ENCODE measurements at regions of chr2 and their contacts with region 1.

Region 1: GRCh38 chr2:200713003-200713703 is 98.6 kb upstream of the BZW1 start:
- DNase-seq: peak; percentile 81 to 90
- ATAC-seq: peak; percentile 99
- H3K4me3 ChIP-seq: peak overlapping the region; percentile 62
- H3K27ac ChIP-seq: peak overlapping the region; percentile 76
- H3K4me1 ChIP-seq: peaks cover 3% of the 10 kb centered on the region
- H3K27me3 ChIP-seq: no peaks in the 10 kb centered on the region
- CTCF ChIP-seq: peak; percentile 79

Region 2: GRCh38 chr2:200765139-200765951 is 52.2 kb after region 1 on chr2:
- intact Hi-C with region 1: loop called in 1 of 2 experiments (anchors 5 kb)
- DNase-seq: peak in 1 of 2 donors; percentile 34
- ATAC-seq: peak; percentile 41 to 70 (median 58)
- H3K4me3 ChIP-seq: no peak overlapping the region
- H3K27ac ChIP-seq: peak overlapping the region; percentile 77
- H3K4me1 ChIP-seq: peaks cover 18% of the 10 kb centered on the region
- H3K27me3 ChIP-seq: no peaks in the 10 kb centered on the region
- CTCF ChIP-seq: no peak

Region 3: DNA sequence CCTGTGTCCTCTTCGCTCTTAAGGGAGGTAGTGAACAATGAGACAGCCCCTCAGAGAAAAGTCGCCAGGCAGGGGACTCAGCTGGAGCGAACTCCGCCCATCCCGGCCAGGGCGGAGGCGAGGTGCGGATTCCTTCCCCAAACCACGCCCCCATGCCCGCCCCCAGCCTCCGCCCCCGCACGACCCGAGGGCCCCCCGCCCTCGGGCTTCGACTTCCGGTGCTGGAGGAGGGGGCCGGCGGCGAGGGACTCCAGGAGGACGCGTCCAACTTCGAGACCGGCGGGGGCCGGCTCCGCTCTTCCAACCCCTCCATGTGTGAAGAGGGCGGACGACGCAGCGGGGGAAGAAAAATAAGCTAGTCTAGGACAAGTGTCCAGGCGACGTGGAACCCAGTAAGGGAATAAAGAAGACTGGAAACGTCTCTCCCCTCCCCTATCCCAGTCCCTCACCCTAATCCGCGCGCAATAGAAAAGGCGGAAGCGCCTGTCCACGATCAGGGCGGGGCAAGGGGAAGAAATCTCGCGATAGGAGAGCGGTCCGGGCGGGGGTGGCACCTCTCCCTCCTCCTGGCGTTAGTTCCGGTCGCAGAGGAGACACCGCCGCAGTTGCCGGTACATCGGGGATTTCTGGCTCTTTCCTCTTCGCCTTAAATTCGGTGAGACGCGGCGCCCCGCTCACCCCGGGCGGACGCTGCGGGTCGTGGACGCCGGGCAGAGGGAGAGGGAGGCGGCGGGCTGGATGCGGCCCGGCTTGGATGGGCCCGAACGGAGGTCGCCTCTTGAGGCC is 98.4 kb after region 1 on chr2 and contains the start of gene BZW1:
- intact Hi-C with region 1: loop called (anchors 1 to 2 kb)
- DNase-seq: peak; percentile 95 to 98
- ATAC-seq: peak; percentile 93 to 94 (median 93)
- H3K4me3 ChIP-seq: peak within 1 kb of the TSS; percentile 91
- H3K27ac ChIP-seq: peak within 1 kb of the TSS; percentile 98
- H3K4me1 ChIP-seq: peaks cover 38% of the 10 kb centered on the region
- H3K27me3 ChIP-seq: no peaks in the 10 kb centered on the region
- CTCF ChIP-seq: no peak
- total RNA-seq, gene BZW1: 55.6 to 122 (median 114) TPM

Region 4: DNA sequence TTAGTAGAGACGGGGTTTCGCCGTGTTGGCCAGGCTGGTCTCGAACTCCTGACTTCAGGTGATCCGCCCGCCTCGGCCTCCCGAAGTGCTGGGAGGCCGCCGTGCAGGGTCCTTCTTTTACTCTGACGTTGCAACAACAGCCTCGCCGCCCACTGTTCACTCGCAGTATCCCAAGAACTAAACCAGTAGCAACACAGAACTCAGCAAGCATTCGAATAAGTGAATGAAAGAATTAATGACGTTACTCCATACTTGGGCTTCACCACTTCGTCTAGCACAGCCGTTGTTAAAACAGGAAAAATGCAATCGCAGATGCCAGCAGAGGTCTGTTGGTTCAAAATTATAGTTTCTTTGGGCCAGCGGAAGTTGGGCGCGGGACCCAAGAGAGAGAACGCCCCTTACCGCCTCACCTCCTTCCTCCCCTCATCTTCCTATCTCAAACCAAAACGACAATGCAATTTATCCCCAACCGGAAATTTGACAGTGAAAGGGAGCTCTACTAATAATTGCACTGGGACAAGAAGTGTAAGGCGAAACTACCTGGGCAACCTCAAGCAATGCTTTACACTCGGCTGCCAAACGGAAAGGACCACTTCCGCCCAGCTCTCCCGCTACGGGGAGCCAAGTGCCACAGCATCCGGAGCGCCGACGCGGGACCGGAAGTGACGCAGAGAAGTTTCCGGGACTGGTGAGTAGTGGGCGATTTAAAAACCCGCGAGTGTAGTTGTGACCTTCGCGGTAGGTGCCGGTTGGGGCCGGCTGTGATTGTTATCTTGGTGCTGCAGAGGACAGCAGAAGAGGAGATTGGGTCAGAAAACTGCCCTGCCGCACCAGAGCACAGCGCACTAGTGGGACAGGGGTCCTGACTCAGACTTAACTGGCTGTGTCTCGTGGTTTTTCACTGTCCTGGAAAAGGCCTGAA is 175.8 kb after region 1 on chr2 and contains the starts of genes NIF3L1 and PPIL3:
- intact Hi-C with region 1: loop called in 1 of 2 experiments (anchors 2 kb)
- DNase-seq: peak; percentile 95 to 97
- ATAC-seq: peak; percentile 97 to 99 (median 98)
- H3K4me3 ChIP-seq: peak within 1 kb of the TSS; percentile 82
- H3K27ac ChIP-seq: peak within 1 kb of the TSS; percentile 92
- H3K4me1 ChIP-seq: peaks cover 11% of the 10 kb centered on the region
- H3K27me3 ChIP-seq: no peaks in the 10 kb centered on the region
- CTCF ChIP-seq: no peak
- total RNA-seq, gene NIF3L1: 11.6 to 21.7 (median 16.0) TPM
- total RNA-seq, gene PPIL3: 13.8 to 18.5 (median 16.8) TPM